OCI-LY7 (cell line): ENCODE measurements at regions of chrX and their contacts with region 1.

Region 1: GRCh38 chrX:9995855-9996339 is 28.7 kb downstream of the CLDN34 start:
- DNase-seq: peak; percentile 72
- H3K4me3 ChIP-seq: no peak overlapping the region
- H3K27ac ChIP-seq: no peak overlapping the region
- H3K4me1 ChIP-seq: no peaks in the 10 kb centered on the region
- CTCF ChIP-seq: peak; percentile 92

Region 2: GRCh38 chrX:9885150-9885549 is 110.7 kb before region 1 on chrX:
- CTCF ChIA-PET with region 1: no interaction called
- POLR2A ChIA-PET with region 1: no interaction called
- intact Hi-C with region 1: loop called (anchors 5 kb)
- DNase-seq: peak; percentile 44
- H3K4me3 ChIP-seq: no peak overlapping the region
- H3K27ac ChIP-seq: no peak overlapping the region
- H3K4me1 ChIP-seq: no peaks in the 10 kb centered on the region
- CTCF ChIP-seq: peak; percentile 77

Region 3: GRCh38 chrX:10615931-10616775 is 620.3 kb after region 1 on chrX:
- CTCF ChIA-PET with region 1: no interaction called
- POLR2A ChIA-PET with region 1: no interaction called
- intact Hi-C with region 1: loop called (anchors 10 kb)
- DNase-seq: peak; percentile 28
- H3K4me3 ChIP-seq: no peak overlapping the region
- H3K27ac ChIP-seq: no peak overlapping the region
- H3K4me1 ChIP-seq: no peaks in the 10 kb centered on the region
- CTCF ChIP-seq: peak; percentile 75

Region 4: DNA sequence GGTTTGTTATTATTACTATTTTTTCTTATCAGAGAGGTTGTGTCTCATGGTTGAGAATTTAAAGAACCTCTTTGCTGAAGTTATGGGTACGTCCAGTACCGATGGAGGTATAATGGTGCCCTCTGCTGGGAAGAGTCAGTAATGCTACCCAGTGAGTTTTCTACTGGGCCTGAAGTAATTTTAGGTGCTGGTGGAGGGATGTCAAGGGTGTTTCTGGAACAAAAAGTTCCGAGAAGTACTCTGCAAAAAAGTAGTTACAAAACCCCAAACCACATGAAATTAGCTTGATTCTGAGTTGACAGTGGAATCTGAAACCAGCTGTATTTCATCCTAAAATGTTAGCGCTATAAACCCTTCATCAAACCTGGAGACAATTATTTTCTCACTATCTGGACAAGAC is 727.0 kb after region 1 on chrX:
- CTCF ChIA-PET with region 1: no interaction called
- POLR2A ChIA-PET with region 1: no interaction called
- intact Hi-C with region 1: loop called (anchors 10 kb)
- DNase-seq: peak; percentile 21
- H3K4me3 ChIP-seq: no peak overlapping the region
- H3K27ac ChIP-seq: no peak overlapping the region
- H3K4me1 ChIP-seq: no peaks in the 10 kb centered on the region
- CTCF ChIP-seq: peak; percentile 80